ENCODE measurements at regions of chr7 and their contacts with region 1.

Region 1: DNA sequence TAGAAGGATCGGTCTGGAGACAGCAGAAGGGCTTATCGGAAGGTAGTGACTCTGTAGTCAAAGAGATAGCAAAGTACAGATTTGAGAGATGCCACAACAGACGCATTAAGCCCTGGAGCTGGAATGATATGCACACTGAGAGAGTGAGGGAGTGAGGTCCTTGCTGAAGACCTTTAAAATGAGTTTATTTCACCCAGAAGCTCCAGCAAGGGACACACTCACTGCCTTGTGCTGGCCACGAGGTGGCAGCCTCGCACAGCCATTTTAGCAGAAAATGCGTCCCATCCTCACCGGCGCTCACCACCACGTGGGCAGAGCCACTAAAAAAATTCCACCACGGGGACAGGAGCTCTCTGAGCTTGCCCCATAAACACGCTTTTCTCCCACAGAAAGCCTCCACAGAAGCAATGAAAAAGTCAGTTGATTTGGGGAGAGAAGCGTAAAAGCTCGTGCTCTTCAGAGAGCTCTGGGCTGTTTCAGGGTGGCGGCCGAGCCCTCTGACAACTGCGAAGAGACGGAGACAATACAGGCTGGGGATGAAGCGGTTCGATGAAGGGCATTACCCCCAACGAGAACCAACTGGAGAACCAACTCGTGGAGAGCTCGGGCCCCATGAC is 163.0 kb upstream of the KLF14 start:
- DNase-seq: peak; percentile 86
- ATAC-seq: peak; percentile 11
- H3K4me3 ChIP-seq: no peak overlapping the region
- H3K27ac ChIP-seq: peak overlapping the region; percentile 99
- H3K4me1 ChIP-seq: peaks cover 88 to 99% of the 10 kb centered on the region in 2 experiments
- H3K27me3 ChIP-seq: no peaks in the 10 kb centered on the region
- CTCF ChIP-seq: peak in 2 of 3 experiments; percentile 73 to 78; a peak in 4 of 6 replicates
- POLR2A ChIP-seq: peak; percentile 9
- RAD21 ChIP-seq: no peak

Region 2: GRCh38 chr7:130875265-130875741 is 21.7 kb before region 1 on chr7:
- CTCF ChIA-PET with region 1: interaction called, 26 read pairs
- POLR2A ChIA-PET with region 1: interaction called, 6 read pairs
- RAD21 ChIA-PET with region 1: no interaction called
- intact Hi-C with region 1: no loop called
- DNase-seq: no peak
- ATAC-seq: peak; percentile 68
- H3K4me3 ChIP-seq: no peak overlapping the region
- H3K27ac ChIP-seq: peak overlapping the region; percentile 100
- H3K4me1 ChIP-seq: peaks cover 69 to 97% of the 10 kb centered on the region in 2 experiments
- H3K27me3 ChIP-seq: no peaks in the 10 kb centered on the region
- CTCF ChIP-seq: peak; percentile 82 to 95 (median 85)
- POLR2A ChIP-seq: no peak
- RAD21 ChIP-seq: peak; percentile 86

Region 3: GRCh38 chr7:130961128-130961601 is 64.2 kb after region 1 on chr7:
- CTCF ChIA-PET with region 1: interaction called, 16 read pairs
- POLR2A ChIA-PET with region 1: interaction called, 23 read pairs
- RAD21 ChIA-PET with region 1: no interaction called
- intact Hi-C with region 1: loop called (anchors 2 kb)
- DNase-seq: peak; percentile 75
- ATAC-seq: peak; percentile 69
- H3K4me3 ChIP-seq: peak overlapping the region; percentile 57 to 64
- H3K27ac ChIP-seq: peak overlapping the region; percentile 91
- H3K4me1 ChIP-seq: peaks cover 48 to 83% of the 10 kb centered on the region in 2 experiments
- H3K27me3 ChIP-seq: no peaks in the 10 kb centered on the region
- CTCF ChIP-seq: no peak
- POLR2A ChIP-seq: peak; percentile 66
- RAD21 ChIP-seq: no peak

Region 4: DNA sequence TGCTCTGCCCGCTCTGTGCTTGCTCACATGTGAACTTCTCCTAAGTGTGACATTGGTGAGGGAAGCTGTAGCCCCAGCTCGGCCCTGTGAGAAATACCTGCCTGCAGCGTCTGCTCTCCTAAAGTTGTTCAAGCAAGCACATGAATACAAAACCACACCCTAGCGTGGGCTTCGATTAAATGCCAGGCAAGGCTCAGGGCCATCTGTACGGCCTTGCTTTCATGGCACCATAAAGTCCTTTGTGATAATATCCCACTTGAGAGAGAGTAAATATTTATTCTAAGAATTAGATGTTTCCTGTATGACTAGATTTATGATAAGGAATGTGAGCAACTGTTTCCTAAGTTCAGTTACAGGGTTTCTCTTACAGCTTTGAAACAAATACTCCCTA is 99.8 kb after region 1 on chr7:
- CTCF ChIA-PET with region 1: interaction called, 14 read pairs
- POLR2A ChIA-PET with region 1: interaction called, 16 read pairs
- RAD21 ChIA-PET with region 1: no interaction called
- intact Hi-C with region 1: loop called (anchors 5 kb)
- DNase-seq: peak; percentile 80
- ATAC-seq: peak; percentile 24
- H3K4me3 ChIP-seq: no peak overlapping the region
- H3K27ac ChIP-seq: peak overlapping the region; percentile 100
- H3K4me1 ChIP-seq: peaks cover 83 to 98% of the 10 kb centered on the region in 2 experiments
- H3K27me3 ChIP-seq: no peaks in the 10 kb centered on the region
- CTCF ChIP-seq: no peak
- POLR2A ChIP-seq: no peak
- RAD21 ChIP-seq: no peak

Region 5: GRCh38 chr7:131040467-131040932 is 143.5 kb after region 1 on chr7:
- CTCF ChIA-PET with region 1: interaction called, 25 read pairs
- POLR2A ChIA-PET with region 1: interaction called, 4 read pairs
- RAD21 ChIA-PET with region 1: interaction called in 1 of 2 experiments, 3 read pairs
- intact Hi-C with region 1: loop called (anchors 1 kb)
- DNase-seq: peak; percentile 73
- ATAC-seq: peak; percentile 79
- H3K4me3 ChIP-seq: no peak overlapping the region
- H3K27ac ChIP-seq: peak overlapping the region; percentile 65
- H3K4me1 ChIP-seq: peaks cover 56 to 63% of the 10 kb centered on the region in 2 experiments
- H3K27me3 ChIP-seq: no peaks in the 10 kb centered on the region
- CTCF ChIP-seq: peak; percentile 85 to 96 (median 90)
- POLR2A ChIP-seq: no peak
- RAD21 ChIP-seq: peak; percentile 99

Region 6: GRCh38 chr7:131107337-131108211 is 210.6 kb after region 1 on chr7:
- CTCF ChIA-PET with region 1: interaction called, 3 read pairs
- POLR2A ChIA-PET with region 1: no interaction called
- RAD21 ChIA-PET with region 1: interaction called, 3 to 4 read pairs
- intact Hi-C with region 1: loop called (anchors 5 kb)
- DNase-seq: peak; percentile 44
- ATAC-seq: peak; percentile 33
- H3K4me3 ChIP-seq: peak overlapping the region; percentile 80 to 88
- H3K27ac ChIP-seq: peak overlapping the region; percentile 87
- H3K4me1 ChIP-seq: peaks cover 26 to 47% of the 10 kb centered on the region in 2 experiments
- H3K27me3 ChIP-seq: no peaks in the 10 kb centered on the region
- CTCF ChIP-seq: no peak
- POLR2A ChIP-seq: no peak
- RAD21 ChIP-seq: no peak

Measured in HCT116 (cell line).